PC-9 (cell line): ENCODE measurements at regions of chr12 and their contacts with region 1.

Region 1: GRCh38 chr12:57744777-57745484 is at the start of gene TSPAN31:
- DNase-seq: peak; percentile 93 to 94
- H3K4me3 ChIP-seq: peak within 1 kb of the TSS; percentile 75
- H3K27ac ChIP-seq: peak within 1 kb of the TSS; percentile 90
- H3K4me1 ChIP-seq: peaks cover 13% of the 10 kb centered on the region
- H3K27me3 ChIP-seq: no peaks in the 10 kb centered on the region
- CTCF ChIP-seq: no peak
- total RNA-seq, gene TSPAN31: 18.2 and 22.5 TPM in 2 replicates

Region 2: GRCh38 chr12:57430931-57431720 is 313.8 kb before region 1 on chr12 and contains the start of gene R3HDM2:
- CTCF ChIA-PET with region 1: interaction called, 10 read pairs
- POLR2A ChIA-PET with region 1: no interaction called
- intact Hi-C with region 1: no loop called
- DNase-seq: peak; percentile 85 to 95
- H3K4me3 ChIP-seq: peak within 1 kb of the TSS; percentile 74
- H3K27ac ChIP-seq: peak within 1 kb of the TSS; percentile 91
- H3K4me1 ChIP-seq: peaks cover 18% of the 10 kb centered on the region
- H3K27me3 ChIP-seq: no peaks in the 10 kb centered on the region
- CTCF ChIP-seq: no peak
- total RNA-seq, gene R3HDM2: 54.4 and 65.1 TPM in 2 replicates

Region 3: DNA sequence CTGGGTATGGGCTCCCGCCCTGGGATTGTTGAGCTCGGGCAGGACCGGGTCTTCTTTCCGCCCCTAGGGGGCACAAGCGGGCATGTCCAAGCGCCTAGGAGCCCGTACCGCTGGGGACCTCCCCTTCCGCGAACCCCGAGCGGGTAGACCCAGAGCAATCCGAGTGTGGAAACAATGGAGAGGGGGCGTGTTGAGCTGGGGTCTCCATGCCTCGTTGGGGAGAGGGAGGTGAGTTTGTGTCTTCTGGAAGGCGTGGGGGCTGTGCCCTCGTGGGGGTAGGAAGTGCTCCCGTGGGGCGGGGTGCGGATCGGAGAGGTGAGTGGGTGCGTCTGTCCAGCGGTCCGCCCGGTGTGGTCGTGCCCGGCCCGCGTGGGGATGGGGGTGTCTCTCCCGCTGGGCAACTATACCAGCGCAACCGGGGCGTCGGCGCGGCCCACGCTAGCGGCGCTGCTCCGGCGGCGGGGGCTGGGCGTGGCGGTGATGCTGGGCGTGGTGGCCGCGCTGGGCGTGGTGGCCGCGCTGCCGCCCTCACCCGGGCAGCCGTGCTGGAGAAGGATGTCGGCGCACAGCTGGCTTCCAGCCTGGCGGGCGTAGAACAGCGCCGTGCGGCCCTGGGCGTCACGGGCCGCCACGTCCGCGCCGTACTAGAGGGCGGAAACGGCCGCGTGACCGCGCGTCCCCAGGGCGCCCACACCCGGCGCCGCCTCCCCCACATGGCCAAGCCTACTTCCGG is 18.6 kb before region 1 on chr12:
- CTCF ChIA-PET with region 1: interaction called, 4 read pairs
- POLR2A ChIA-PET with region 1: interaction called, 9 read pairs
- intact Hi-C with region 1: loop called (anchors 2 kb)
- DNase-seq: peak; percentile 58 to 85
- H3K4me3 ChIP-seq: peak overlapping the region; percentile 80
- H3K27ac ChIP-seq: no peak overlapping the region
- H3K4me1 ChIP-seq: no peaks in the 10 kb centered on the region
- H3K27me3 ChIP-seq: peaks cover 7% of the 10 kb centered on the region; the same call in 1 of the 2 replicates
- CTCF ChIP-seq: peak; percentile 89

Region 4: GRCh38 chr12:57771708-57772428 is 26.9 kb after region 1 on chr12 and contains the start of gene METTL1:
- CTCF ChIA-PET with region 1: no interaction called
- POLR2A ChIA-PET with region 1: interaction called, 15 read pairs
- intact Hi-C with region 1: no loop called
- DNase-seq: peak; percentile 89 to 91
- H3K4me3 ChIP-seq: peak within 1 kb of the TSS; percentile 68
- H3K27ac ChIP-seq: peak within 1 kb of the TSS; percentile 75
- H3K4me1 ChIP-seq: peaks cover 8% of the 10 kb centered on the region; the same call in 1 of the 2 replicates
- H3K27me3 ChIP-seq: no peaks in the 10 kb centered on the region
- CTCF ChIP-seq: no peak
- total RNA-seq, gene METTL1: 15.8 and 17.9 TPM in 2 replicates